GM18951 (cell line): ENCODE measurements at regions of chr3 and their contacts with region 1.

Region 1: DNA sequence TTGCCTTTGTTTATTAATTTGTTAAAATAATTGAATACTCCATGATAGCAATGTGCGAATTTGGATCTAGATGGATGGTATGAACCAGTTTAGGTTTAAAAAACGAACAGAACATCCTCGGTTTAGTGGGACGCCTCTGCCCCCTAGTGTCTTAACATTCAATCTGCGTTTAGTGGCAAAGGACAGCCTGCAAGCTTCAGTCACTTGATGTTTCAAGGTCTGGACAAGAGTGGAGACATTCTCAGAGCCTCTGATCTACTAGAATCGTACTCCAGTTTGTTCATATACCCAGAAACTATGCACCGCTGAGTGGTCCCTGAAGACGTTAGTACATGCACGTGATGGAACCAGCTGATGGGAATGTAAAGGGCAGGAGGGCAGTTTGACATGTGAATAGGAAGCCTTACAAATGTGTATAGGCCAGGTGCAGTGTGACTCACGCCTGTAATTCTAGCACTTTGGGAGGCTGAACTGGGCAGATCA is 17.8 kb upstream of the ATP13A4 start:
- POLR2A ChIP-seq: no peak

Region 2: GRCh38 chr3:192566706-192567290 is 1005.7 kb before region 1 on chr3:
- in situ Hi-C with region 1: loop called (anchors 25 kb)
- POLR2A ChIP-seq: no peak

Region 3: GRCh38 chr3:192802957-192803899 is 769.2 kb before region 1 on chr3:
- in situ Hi-C with region 1: loop called (anchors 25 kb)
- POLR2A ChIP-seq: no peak

Region 4: DNA sequence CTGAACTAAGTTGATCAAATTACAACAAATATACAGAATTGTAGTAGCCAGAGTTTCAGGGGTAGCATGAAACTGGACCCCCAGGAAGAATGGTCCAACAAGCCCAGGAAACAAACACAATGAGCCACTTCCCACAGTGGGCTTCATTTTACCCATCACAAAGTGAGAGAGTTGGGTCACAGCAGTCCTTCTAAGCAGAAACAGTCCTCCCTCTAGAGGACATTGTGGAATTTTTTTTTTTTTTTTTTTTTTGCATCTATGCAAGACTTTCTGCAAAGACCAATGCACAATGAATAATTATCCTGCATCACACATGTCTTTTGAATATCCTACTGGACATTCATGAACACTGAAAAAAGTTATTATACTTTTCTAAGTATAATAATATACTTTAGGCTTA is 120.1 kb before region 1 on chr3:
- in situ Hi-C with region 1: loop called (anchors 10 kb)
- POLR2A ChIP-seq: no peak